WTC11 (cell line): ENCODE measurements at regions of chr2 and their contacts with region 1.

Region 1: GRCh38 chr2:216713691-216714336 is 18.5 kb upstream of the IGFBP5 start:
- DNase-seq: no peak
- ATAC-seq: no peak
- H3K4me3 Mint-ChIP-seq: no peak overlapping the region
- H3K27ac Mint-ChIP-seq: no peak overlapping the region
- H3K4me1 Mint-ChIP-seq: peaks cover 7% of the 10 kb centered on the region
- H3K27me3 Mint-ChIP-seq: no peaks in the 10 kb centered on the region; the same call in 1 of the 2 replicates
- CTCF ChIP-seq: no peak

Region 2: DNA sequence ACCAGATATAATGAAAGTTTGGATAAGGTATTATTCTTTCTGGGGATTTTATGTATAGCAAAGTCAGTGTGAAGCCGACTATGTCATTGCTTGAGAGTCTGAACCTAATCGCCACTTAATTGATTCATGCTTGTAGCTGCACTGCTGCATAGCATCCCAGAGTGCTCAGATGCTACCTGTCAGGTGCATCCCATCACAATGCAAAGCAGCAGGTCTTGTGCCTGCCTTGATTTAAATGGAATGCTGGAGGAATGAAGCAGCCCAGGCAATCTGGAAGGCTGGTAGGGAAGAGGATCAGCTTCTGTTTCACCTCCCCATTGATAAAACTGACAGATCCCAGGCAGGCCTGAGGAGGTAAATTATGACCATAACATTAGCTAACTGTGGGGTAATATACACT is 1442.4 kb before region 1 on chr2:
- CTCF ChIA-PET with region 1: no interaction called
- POLR2A ChIA-PET with region 1: interaction called, 10 read pairs
- DNase-seq: peak; percentile 39
- ATAC-seq: peak; percentile 95
- H3K4me3 Mint-ChIP-seq: no peak overlapping the region
- H3K27ac Mint-ChIP-seq: 0 out of 2 replicates have a peak overlapping the region, but pooled peaks have one; percentile 35
- H3K4me1 Mint-ChIP-seq: peaks cover 13% of the 10 kb centered on the region
- H3K27me3 Mint-ChIP-seq: no peaks in the 10 kb centered on the region
- CTCF ChIP-seq: no peak

Region 3: GRCh38 chr2:216679221-216680019 is 34.4 kb before region 1 on chr2:
- CTCF ChIA-PET with region 1: no interaction called
- POLR2A ChIA-PET with region 1: no interaction called
- DNase-seq: no peak
- ATAC-seq: peak; percentile 48
- H3K4me3 Mint-ChIP-seq: no peak overlapping the region
- H3K27ac Mint-ChIP-seq: peak overlapping the region; percentile 3
- H3K4me1 Mint-ChIP-seq: peaks cover 42% of the 10 kb centered on the region
- H3K27me3 Mint-ChIP-seq: no peaks in the 10 kb centered on the region; the same call in 1 of the 2 replicates
- CTCF ChIP-seq: no peak